SK-N-SH (cell line): ENCODE measurements at regions of chr17 and their contacts with region 1.

Region 1: DNA sequence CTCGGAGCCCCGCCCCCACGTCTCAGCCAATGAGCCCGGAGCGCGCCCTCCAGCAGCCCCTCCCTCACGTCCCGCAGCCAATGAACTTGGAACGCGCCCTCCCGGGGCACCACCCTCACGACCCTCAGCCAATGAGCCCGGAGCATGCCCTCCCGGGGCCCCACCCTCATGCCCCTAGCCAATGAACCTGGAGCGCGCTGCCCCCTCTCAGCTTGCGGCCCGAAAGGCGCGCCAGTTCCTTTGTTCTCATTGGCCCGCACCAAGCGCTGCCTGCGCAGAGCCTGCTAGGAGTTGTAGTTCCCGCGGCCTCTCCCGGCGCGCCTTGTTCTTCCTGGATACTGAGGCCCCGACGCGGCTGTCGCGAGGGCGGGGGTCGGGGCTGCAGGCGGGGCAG is at the start of gene LRRC45:
- DNase-seq: peak; percentile 100
- H3K4me3 ChIP-seq: peak within 1 kb of the TSS; percentile 88 to 92
- H3K27ac ChIP-seq: peak within 1 kb of the TSS; percentile 41 to 69
- H3K4me1 ChIP-seq: peaks cover 18 to 36% of the 10 kb centered on the region in 2 experiments; a peak in 3 of 4 replicates
- H3K27me3 ChIP-seq: no peaks in the 10 kb centered on the region
- CTCF ChIP-seq: no peak
- EP300 ChIP-seq: no peak
- RAD21 ChIP-seq: no peak
- polyA plus RNA-seq, gene LRRC45: 30.3 and 31.5 TPM in 2 replicates

Region 2: DNA sequence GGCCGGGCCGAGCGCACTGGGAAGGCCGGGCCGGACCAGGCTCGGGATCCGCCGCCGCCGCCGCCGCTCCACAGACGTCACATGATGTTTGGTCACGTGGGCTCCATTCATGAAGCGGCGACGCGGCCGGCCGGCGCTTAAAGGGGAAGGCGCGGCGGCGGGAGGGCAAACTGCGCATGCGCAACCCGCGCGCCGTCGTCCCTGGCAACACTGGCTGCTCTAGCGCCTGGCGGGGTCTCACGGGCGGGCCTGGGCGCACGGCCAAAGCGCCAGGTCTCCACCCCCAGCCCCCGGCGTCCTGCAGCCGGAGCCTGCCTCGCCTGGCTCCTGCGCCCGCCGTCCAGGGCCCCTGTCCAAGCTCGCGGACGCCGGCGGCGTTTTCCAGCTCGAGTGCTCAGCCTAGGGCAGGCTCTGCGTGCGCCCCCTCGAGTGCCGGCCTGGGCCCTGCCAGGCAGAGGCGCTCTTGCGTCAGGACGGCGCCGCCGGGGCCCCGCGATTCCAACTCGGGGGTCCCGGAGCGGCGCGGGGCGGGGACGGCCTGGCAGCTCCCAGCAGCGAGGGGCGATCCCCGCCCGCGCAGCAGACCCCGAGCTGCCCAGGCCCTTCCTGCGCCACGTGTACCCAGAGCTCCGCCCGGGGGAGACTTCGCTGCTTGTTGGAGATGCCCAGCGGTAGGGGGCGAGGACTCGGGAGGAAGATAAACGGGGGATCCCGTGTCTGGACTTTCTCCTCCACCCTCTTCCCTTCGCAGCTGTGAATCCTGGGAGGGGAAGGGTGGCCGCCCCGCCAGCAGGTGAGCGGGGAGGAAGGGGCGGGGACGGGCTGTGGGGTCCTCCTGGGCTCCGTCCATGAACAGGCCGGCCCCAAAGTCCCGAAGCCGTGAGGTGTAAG is 95.1 kb before region 1 on chr17 and contains the start of gene MAFG:
- CTCF ChIA-PET with region 1: interaction called, 64 read pairs
- POLR2A ChIA-PET with region 1: interaction called, 7 read pairs
- DNase-seq: peak; percentile 100
- H3K4me3 ChIP-seq: peak within 1 kb of the TSS; percentile 92
- H3K27ac ChIP-seq: peak within 1 kb of the TSS; percentile 72 to 85
- H3K4me1 ChIP-seq: peaks cover 20 to 31% of the 10 kb centered on the region in 2 experiments; a peak in 2 of 4 replicates
- H3K27me3 ChIP-seq: no peaks in the 10 kb centered on the region
- CTCF ChIP-seq: peak; percentile 63
- EP300 ChIP-seq: peak in 1 of 2 experiments; percentile 44; a peak in 1 of 4 replicates
- RAD21 ChIP-seq: 0 out of 2 replicates have a peak, but pooled peaks have one; percentile 26
- polyA plus RNA-seq, gene MAFG: 30.3 and 38.7 TPM in 2 replicates

Region 3: DNA sequence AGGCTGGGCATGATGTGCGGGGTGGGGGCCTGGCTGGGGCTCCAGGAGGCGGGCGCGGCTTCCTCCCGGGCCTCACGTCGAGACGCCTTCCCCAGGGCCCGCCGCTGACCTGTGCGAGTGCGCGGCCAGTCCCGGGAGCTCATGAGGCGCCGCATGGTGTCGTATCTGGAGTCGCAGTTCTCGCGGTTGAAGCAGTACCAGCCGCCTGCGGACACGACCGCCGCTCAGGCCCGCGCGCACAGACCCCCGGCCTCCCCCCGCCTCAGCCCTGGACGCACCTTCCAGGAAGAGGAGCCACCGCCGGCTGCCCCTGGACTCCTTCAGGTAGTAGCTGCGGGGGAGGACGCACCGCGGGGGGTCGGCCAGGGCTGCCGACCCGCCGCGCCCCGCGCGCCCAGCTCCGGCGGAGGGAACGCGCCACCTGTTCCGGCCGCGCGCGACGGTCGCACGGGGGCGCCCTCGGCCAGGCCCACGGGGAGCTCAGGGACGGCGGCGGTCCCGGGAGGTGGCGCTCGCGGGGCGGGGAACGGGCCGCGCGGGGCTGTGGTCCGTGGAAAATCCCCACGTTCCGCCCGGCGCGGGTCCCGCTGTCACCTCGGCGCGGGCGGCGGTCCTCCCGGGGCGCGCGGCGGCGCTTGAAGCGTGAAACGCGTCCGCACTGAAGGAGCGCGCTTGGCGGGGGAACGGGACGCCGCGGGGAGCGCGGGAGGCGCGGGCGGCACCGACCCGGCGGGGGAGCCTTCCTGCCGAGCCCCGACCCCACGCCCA is 63.4 kb before region 1 on chr17:
- CTCF ChIA-PET with region 1: interaction called, 1,216 read pairs
- POLR2A ChIA-PET with region 1: interaction called, 41 read pairs
- DNase-seq: peak; percentile 96
- H3K4me3 ChIP-seq: peak overlapping the region; percentile 40 to 49
- H3K27ac ChIP-seq: no peak overlapping the region
- H3K4me1 ChIP-seq: peaks cover 0 to 25% of the 10 kb centered on the region in 2 experiments; a peak in 1 of 4 replicates
- H3K27me3 ChIP-seq: peaks cover 18% of the 10 kb centered on the region
- CTCF ChIP-seq: peak; percentile 62
- EP300 ChIP-seq: peak in 1 of 2 experiments; percentile 17; a peak in 1 of 4 replicates
- RAD21 ChIP-seq: peak; percentile 92

Region 4: DNA sequence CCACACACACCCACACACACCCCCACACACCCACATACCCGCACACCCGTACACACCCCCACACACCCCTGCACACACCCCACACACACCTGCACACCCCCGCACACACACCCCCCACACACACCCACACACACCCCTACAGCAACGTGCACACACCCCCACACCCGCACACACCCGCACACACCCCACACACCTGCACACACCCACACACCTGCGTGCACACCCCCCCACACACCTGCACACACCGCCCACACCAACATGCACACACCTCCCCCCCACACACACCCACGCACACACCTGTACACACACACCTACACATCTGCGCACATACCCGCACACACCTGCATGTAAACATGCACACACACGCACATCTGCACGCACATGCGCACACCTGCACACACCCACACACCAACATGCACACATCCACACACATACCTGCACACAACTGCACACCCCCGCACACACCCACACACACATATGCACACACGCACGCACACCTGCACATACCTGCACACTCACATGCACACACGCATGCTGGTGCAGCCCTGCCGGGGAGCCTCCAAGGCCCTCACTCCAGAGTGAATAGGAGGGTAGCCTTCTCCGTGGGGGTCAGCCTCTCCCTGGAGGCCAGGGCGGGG is 38.1 kb before region 1 on chr17:
- CTCF ChIA-PET with region 1: interaction called, 85 read pairs
- POLR2A ChIA-PET with region 1: no interaction called
- DNase-seq: no peak
- H3K4me3 ChIP-seq: no peak overlapping the region
- H3K27ac ChIP-seq: no peak overlapping the region
- H3K4me1 ChIP-seq: no peaks in the 10 kb centered on the region
- H3K27me3 ChIP-seq: no peaks in the 10 kb centered on the region
- CTCF ChIP-seq: no peak
- EP300 ChIP-seq: no peak
- RAD21 ChIP-seq: no peak

Region 5: GRCh38 chr17:82037113-82037888 is 14.3 kb after region 1 on chr17 and contains the start of gene DCXR:
- CTCF ChIA-PET with region 1: interaction called, 103 read pairs
- POLR2A ChIA-PET with region 1: interaction called, 5 read pairs
- DNase-seq: peak; percentile 100
- H3K4me3 ChIP-seq: peak within 1 kb of the TSS; percentile 72 to 87
- H3K27ac ChIP-seq: peak within 1 kb of the TSS; percentile 74 to 92
- H3K4me1 ChIP-seq: peaks cover 7 to 27% of the 10 kb centered on the region in 2 experiments
- H3K27me3 ChIP-seq: no peaks in the 10 kb centered on the region
- CTCF ChIP-seq: peak; percentile 84
- EP300 ChIP-seq: no peak
- RAD21 ChIP-seq: peak; percentile 44
- polyA plus RNA-seq, gene DCXR: 153 and 190 TPM in 2 replicates

Region 6: GRCh38 chr17:82153745-82154375 is 130.9 kb after region 1 on chr17:
- CTCF ChIA-PET with region 1: interaction called, 174 read pairs
- POLR2A ChIA-PET with region 1: no interaction called
- DNase-seq: peak; percentile 97
- H3K4me3 ChIP-seq: no peak overlapping the region; a peak in 1 of 4 replicates
- H3K27ac ChIP-seq: no peak overlapping the region
- H3K4me1 ChIP-seq: no peaks in the 10 kb centered on the region
- H3K27me3 ChIP-seq: no peaks in the 10 kb centered on the region
- CTCF ChIP-seq: peak; percentile 85
- EP300 ChIP-seq: no peak
- RAD21 ChIP-seq: peak; percentile 97

Region 7: DNA sequence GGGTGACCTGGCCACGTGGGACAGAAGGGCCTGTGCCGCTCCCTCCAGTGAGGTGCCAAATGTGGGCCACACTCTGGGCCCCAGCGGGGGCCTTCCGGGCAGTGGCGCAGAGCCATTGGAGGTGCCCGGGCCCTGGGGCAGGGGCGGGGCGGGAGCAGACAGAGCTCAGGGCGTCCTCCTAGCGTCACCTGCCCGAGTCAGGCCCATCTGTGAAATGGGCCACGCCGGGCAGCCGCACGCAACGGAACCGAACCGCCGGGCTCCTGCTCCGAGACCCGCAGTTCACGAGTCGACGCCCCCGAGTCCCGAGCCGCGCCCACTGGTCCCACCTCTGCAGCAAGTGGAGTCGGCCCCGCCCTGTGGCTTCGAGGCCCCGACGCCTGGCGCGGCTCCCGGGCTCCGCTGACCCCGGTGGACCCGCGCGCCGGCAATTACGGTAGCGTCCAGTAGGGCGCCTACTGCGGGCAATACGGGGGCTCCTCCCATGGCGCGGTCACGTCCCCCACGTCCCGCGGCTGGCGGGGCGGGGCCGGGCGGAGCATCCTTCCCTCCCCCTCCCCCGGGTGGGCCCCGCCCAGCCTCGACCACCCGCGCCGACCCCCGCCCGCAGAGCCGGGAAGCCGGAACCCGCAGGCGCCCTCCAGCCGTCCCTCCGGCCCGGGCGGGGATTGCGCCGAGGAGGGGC is 207.8 kb after region 1 on chr17:
- CTCF ChIA-PET with region 1: no interaction called
- POLR2A ChIA-PET with region 1: no interaction called
- DNase-seq: peak; percentile 77
- H3K4me3 ChIP-seq: peak overlapping the region in 1 of 2 experiments; percentile 62; a peak in 2 of 4 replicates
- H3K27ac ChIP-seq: no peak overlapping the region
- H3K4me1 ChIP-seq: peaks cover 5 to 6% of the 10 kb centered on the region in 2 experiments; a peak in 2 of 4 replicates
- H3K27me3 ChIP-seq: no peaks in the 10 kb centered on the region
- CTCF ChIP-seq: no peak
- EP300 ChIP-seq: no peak
- RAD21 ChIP-seq: no peak